ENCODE measurements at regions of chr15 and their contacts with region 1.

Region 1: DNA sequence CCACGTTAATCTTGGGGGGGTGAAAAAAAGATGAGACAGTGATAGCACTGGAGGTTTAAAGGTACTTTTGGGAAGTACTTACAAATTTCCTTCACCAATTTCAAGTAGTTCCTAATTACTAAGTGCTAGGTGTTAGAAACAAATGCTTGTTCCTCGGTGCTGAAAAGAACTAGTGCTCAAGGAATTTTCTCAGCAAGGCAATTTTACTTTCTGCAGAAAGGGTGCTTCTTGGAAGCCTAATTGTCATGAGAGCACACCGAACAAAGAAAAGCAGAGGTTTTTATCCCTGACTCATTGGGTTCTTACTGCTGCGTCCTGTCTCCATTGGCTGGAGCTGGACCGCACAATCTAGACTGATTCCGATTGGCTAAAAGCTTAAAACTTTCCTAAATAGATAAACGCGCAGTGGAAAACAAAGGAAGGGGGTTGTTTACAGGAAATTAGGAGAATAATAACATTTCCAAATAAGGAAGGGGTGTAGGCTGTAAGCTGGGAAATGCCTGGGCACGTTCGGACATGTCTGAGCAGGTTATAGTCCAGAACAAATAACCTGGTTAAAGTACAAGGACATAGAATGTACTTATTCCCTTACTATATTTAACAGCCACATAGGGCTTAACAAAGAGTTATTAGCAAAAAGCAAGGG is 49.6 kb downstream of the CHD2 start:
- DNase-seq: no peak
- ATAC-seq: no peak
- H3K4me3 ChIP-seq: no peak overlapping the region
- H3K27ac ChIP-seq: no peak overlapping the region
- H3K4me1 ChIP-seq: no peaks in the 10 kb centered on the region
- H3K27me3 ChIP-seq: no peaks in the 10 kb centered on the region

Region 2: DNA sequence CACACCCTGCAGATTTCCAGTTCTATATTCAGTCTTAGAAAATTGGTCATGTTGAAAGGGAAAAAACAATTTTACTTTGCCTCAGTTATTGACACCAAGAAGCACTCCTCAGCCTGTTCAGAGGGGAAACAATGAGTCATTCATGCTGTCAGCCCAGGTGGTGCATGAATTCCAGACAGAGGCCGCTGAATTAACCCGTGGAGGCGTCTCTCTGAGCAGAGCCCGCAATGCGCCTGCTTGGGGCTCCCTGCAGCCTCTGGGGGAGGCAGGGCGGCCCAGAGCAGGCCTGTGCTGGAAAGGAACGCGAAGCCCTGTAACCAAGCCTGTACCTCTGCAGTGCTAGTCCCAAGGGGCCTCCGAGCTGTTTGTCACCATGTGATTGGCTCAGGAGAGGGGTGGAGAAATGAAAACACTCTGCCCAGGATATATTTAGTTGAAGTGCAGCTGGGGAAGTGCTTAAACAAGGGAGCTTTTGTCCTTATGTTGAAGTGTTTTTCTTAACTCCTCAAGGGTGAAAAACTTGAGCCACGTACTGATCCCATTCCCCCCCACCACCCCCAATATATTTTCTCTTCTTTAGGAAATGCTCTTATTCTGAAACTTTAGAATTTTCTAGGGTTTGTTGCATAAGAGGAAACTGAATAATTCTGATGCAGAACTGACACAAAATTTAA is 117.9 kb before region 1 on chr15:
- intact Hi-C with region 1: no loop called
- DNase-seq: peak; percentile 93 to 97 (median 97)
- ATAC-seq: peak; percentile 99
- H3K4me3 ChIP-seq: peak overlapping the region; percentile 31
- H3K27ac ChIP-seq: peak overlapping the region; percentile 86
- H3K4me1 ChIP-seq: peaks cover 3% of the 10 kb centered on the region
- H3K27me3 ChIP-seq: no peaks in the 10 kb centered on the region

Region 3: GRCh38 chr15:92992720-92993119 is 43.0 kb after region 1 on chr15:
- intact Hi-C with region 1: loop called in 1 of 4 experiments (anchors 10 kb)
- DNase-seq: peak in 1 of 3 donors; percentile 20
- ATAC-seq: peak; percentile 68 to 74
- H3K4me3 ChIP-seq: no peak overlapping the region
- H3K27ac ChIP-seq: peak overlapping the region; percentile 64
- H3K4me1 ChIP-seq: no peaks in the 10 kb centered on the region
- H3K27me3 ChIP-seq: no peaks in the 10 kb centered on the region

Region 4: GRCh38 chr15:93001881-93002280 is 52.2 kb after region 1 on chr15:
- intact Hi-C with region 1: loop called in 2 of 4 experiments (anchors 10 kb)
- DNase-seq: no peak
- ATAC-seq: no peak
- H3K4me3 ChIP-seq: no peak overlapping the region
- H3K27ac ChIP-seq: no peak overlapping the region
- H3K4me1 ChIP-seq: no peaks in the 10 kb centered on the region
- H3K27me3 ChIP-seq: no peaks in the 10 kb centered on the region

Region 5: DNA sequence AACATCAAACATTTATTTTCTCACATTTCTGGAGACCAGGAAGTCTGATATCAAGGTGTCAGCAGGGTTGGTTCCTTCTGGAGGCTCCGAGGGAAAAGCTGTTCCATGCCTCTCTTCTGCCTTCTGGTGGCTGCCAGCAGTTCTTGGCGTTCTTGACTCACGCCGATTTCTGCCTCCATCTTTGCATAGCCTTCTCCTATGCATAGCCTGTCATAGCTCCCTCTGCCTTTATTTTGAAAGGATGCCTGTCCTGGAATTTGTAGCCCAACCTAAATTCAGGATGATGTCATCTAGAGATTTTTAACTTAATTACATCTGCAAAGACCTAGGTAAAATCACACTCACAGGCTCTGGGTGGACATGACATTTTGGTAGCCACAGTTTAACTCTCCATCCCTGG is 68.9 kb after region 1 on chr15:
- intact Hi-C with region 1: loop called in 1 of 4 experiments (anchors 10 kb)
- DNase-seq: peak in 1 of 3 donors; percentile 45
- ATAC-seq: peak in 1 of 2 donors; percentile 27
- H3K4me3 ChIP-seq: no peak overlapping the region
- H3K27ac ChIP-seq: no peak overlapping the region
- H3K4me1 ChIP-seq: peaks cover 5% of the 10 kb centered on the region
- H3K27me3 ChIP-seq: no peaks in the 10 kb centered on the region